Posterior vena cava (tissue), 2 donors: ENCODE measurements at regions of chr13 and their contacts with region 1.

Region 1: GRCh38 chr13:23842406-23842805 is 46.8 kb downstream of the MIPEP start:
- DNase-seq: no peak

Region 2: GRCh38 chr13:23790577-23791170 is 51.7 kb before region 1 on chr13:
- intact Hi-C with region 1: loop called in 1 of 2 experiments (anchors 1 kb)
- DNase-seq: no peak